ENCODE measurements at regions of chr15 and their contacts with region 1.

Region 1: GRCh38 chr15:41401904-41402267 is 410 bp downstream of the NDUFAF1 start:
- H3K4me3 Mint-ChIP-seq: peak overlapping the region; percentile 96
- H3K27ac Mint-ChIP-seq: peak overlapping the region; percentile 97
- H3K4me1 Mint-ChIP-seq: peaks cover 35% of the 10 kb centered on the region
- H3K27me3 Mint-ChIP-seq: no peaks in the 10 kb centered on the region

Region 2: GRCh38 chr15:41416742-41417406 is 15.0 kb after region 1 on chr15 and contains the start of gene RTF1:
- intact Hi-C with region 1: loop called (anchors 2 kb)
- H3K4me3 Mint-ChIP-seq: peak within 1 kb of the TSS; percentile 98
- H3K27ac Mint-ChIP-seq: peak within 1 kb of the TSS; percentile 92
- H3K4me1 Mint-ChIP-seq: peaks cover 48% of the 10 kb centered on the region
- H3K27me3 Mint-ChIP-seq: no peaks in the 10 kb centered on the region